GM12878 (cell line): ENCODE measurements at regions of chr3 and their contacts with region 1.

Region 1: DNA sequence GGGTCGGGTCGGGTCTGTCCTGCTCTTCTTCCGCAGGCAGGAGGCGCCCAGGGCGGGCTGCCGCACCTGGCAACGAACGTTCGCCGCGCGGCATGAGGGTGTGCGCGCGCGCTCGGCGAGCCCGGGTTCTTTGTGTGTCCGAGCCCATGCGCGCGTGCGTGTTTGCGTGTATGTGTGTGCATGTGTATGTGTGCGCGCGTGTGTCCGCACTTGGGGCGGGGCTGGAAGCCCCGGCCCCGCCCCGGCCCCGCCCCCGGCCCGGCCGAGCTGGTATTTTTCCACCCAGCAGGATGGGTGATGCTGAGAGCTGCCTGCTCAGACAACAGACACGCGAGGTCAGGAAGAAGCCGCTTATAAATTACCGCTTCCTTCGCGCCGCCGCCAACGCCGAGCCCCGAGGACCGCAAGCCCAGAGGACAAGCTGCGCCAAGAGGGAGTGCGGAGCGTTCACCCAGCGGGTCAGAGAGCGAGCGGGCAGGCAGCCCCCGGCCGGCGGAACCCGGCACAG is at the start of gene SLC6A6:
- DNase-seq: peak; percentile 79
- ATAC-seq: peak; percentile 82
- H3K4me3 ChIP-seq: peak within 1 kb of the TSS; percentile 89
- H3K27ac ChIP-seq: peak within 1 kb of the TSS; percentile 82
- H3K4me1 ChIP-seq: peaks cover 29% of the 10 kb centered on the region
- H3K27me3 ChIP-seq: no peaks in the 10 kb centered on the region; a peak in 1 of 4 replicates
- CTCF ChIP-seq: peak; percentile 38 to 54 (median 41); a peak in 5 of 6 replicates
- EP300 ChIP-seq: 0 out of 4 replicates have a peak, but pooled peaks of 1 of the 2 experiments have one; percentile 24
- POLR2A ChIP-seq: peak; percentile 78
- RAD21 ChIP-seq: peak; percentile 46; the same call in 1 of the 2 replicates
- polyA plus RNA-seq, gene SLC6A6: 5.6 to 6.2 TPM

Region 2: DNA sequence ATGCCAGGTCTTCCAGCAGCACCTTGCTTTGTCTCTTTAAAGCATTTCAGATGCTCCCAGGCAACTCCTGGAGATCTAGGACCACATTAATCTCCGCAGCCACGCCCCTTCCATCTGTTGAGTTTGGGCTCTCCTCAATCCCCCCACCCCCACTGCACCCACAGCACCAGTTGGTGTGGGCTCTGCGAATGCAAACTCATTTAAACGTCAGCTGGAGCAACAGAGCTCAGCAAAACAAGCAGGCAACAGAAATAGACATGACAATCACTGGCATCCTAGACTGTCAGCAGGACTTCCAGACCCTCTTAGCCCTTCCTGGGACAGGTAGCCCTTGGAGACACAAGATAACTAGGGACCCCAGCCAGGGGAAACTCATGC is 116.8 kb before region 1 on chr3:
- CTCF ChIA-PET with region 1: no interaction called
- POLR2A ChIA-PET with region 1: no interaction called
- RAD21 ChIA-PET with region 1: no interaction called
- SMC1A ChIA-PET with region 1: no interaction called
- in situ Hi-C with region 1: no loop called
- intact Hi-C with region 1: no loop called
- DNase-seq: no peak
- ATAC-seq: no peak
- H3K4me3 ChIP-seq: no peak overlapping the region
- H3K27ac ChIP-seq: no peak overlapping the region
- H3K4me1 ChIP-seq: no peaks in the 10 kb centered on the region
- H3K27me3 ChIP-seq: peaks cover 3 to 4% of the 10 kb centered on the region in 2 experiments; a peak in 1 of 4 replicates
- CTCF ChIP-seq: no peak
- EP300 ChIP-seq: no peak
- POLR2A ChIP-seq: no peak
- RAD21 ChIP-seq: no peak

Region 3: GRCh38 chr3:14426063-14426620 is 23.8 kb after region 1 on chr3:
- CTCF ChIA-PET with region 1: interaction called, 96 read pairs
- POLR2A ChIA-PET with region 1: interaction called, 53 read pairs
- RAD21 ChIA-PET with region 1: interaction called, 144 read pairs
- SMC1A ChIA-PET with region 1: interaction called, 143 read pairs
- in situ Hi-C with region 1: no loop called
- intact Hi-C with region 1: no loop called
- DNase-seq: no peak
- ATAC-seq: peak; percentile 76
- H3K4me3 ChIP-seq: 0 out of 2 replicates have a peak overlapping the region, but pooled peaks have one; percentile 28
- H3K27ac ChIP-seq: peak overlapping the region; percentile 65
- H3K4me1 ChIP-seq: peaks cover 80% of the 10 kb centered on the region
- H3K27me3 ChIP-seq: no peaks in the 10 kb centered on the region
- CTCF ChIP-seq: peak in 2 of 3 experiments; percentile 13 to 22; a peak in 1 of 6 replicates
- EP300 ChIP-seq: no peak
- POLR2A ChIP-seq: no peak
- RAD21 ChIP-seq: no peak

Region 4: DNA sequence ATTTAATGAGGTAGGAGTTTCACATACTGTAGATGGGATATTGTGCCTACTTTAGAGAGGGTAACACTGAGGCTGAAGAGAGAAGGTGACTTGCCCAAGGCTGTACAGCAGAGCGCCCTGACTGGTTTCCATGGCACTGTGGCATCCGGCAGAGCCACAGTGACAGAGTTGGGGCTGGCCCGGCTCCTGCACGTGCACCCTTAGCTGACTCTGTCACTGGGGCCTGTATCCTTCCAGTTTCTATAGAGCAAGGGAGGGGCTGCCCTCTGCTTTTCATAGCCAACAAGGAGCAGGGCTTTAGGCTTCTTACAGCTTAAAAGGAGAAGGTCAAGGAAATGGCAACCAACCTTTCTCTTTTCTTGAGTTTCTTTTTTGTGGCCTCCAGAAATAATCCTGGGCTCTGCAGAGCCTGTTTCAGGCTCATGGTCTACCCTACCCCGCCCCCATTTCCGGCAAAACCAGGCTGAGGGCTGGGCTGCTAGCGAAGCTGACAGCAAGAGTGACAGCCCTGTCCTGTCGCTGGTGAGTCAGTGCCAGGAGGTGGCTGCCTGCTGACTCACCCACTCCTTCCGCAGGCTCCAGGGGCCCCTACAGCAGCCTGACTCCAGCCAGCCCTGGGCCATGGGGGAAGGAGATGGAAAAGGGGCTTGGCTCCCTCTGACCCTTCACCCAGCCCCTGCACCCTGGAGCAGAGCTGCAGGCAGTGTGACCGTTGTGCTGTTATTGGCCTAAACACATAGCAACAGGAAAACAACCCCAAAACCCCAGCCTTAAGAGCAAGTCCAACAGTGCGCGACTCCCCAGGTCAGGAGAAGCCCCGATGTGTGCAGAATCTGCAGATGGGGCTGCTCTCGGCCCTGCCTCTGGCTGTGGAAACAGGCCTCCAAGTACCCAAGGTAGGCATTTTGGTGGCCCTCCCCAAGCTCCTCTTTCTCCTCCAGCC is 29.8 kb after region 1 on chr3:
- CTCF ChIA-PET with region 1: interaction called, 96 read pairs
- POLR2A ChIA-PET with region 1: interaction called, 53 read pairs
- RAD21 ChIA-PET with region 1: interaction called, 144 read pairs
- SMC1A ChIA-PET with region 1: interaction called, 143 read pairs
- in situ Hi-C with region 1: no loop called
- intact Hi-C with region 1: loop called (anchors 1 kb)
- DNase-seq: peak; percentile 90
- ATAC-seq: peak; percentile 87
- H3K4me3 ChIP-seq: peak overlapping the region; percentile 60
- H3K27ac ChIP-seq: peak overlapping the region; percentile 99
- H3K4me1 ChIP-seq: peaks cover 66% of the 10 kb centered on the region
- H3K27me3 ChIP-seq: no peaks in the 10 kb centered on the region
- CTCF ChIP-seq: no peak
- EP300 ChIP-seq: peak; percentile 51 to 71; a peak in 2 of 4 replicates
- POLR2A ChIP-seq: peak; percentile 87
- RAD21 ChIP-seq: no peak

Region 5: GRCh38 chr3:14890476-14890875 is 488.1 kb after region 1 on chr3:
- CTCF ChIA-PET with region 1: no interaction called
- POLR2A ChIA-PET with region 1: no interaction called
- RAD21 ChIA-PET with region 1: no interaction called
- SMC1A ChIA-PET with region 1: no interaction called
- in situ Hi-C with region 1: no loop called
- intact Hi-C with region 1: no loop called
- DNase-seq: peak; percentile 20
- ATAC-seq: peak; percentile 89
- H3K4me3 ChIP-seq: no peak overlapping the region
- H3K27ac ChIP-seq: no peak overlapping the region
- H3K4me1 ChIP-seq: no peaks in the 10 kb centered on the region
- H3K27me3 ChIP-seq: peaks cover 0 to 4% of the 10 kb centered on the region in 2 experiments; a peak in 2 of 4 replicates
- CTCF ChIP-seq: no peak
- EP300 ChIP-seq: no peak
- POLR2A ChIP-seq: no peak
- RAD21 ChIP-seq: no peak